Sciatic nerve (tissue), 2 donors: ENCODE measurements at regions of chr11 and their contacts with region 1.

Region 1: GRCh38 chr11:128905345-128906184 is 14.4 kb downstream of the KCNJ5 start:
- DNase-seq: no peak
- ATAC-seq: peak; percentile 67

Region 2: DNA sequence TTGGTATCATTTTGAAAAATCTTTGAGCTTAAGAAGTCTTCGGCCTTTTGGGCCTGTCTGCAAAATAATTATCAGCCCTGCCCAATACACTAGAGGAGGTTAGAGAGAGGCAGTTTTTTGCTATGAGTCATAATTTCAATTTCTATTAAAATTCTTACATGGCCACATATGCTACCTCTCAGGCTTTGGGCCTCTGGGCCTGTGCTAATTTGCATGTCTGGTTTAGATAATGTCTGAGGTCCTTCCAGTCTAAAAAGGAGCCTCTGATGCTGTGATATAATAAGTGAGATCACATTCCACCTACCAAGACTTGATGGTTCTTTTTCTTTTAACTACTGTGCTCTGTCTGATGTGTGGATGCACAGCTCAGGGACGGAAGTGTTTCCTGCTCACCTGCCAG is 109.3 kb before region 1 on chr11:
- intact Hi-C with region 1: no loop called
- DNase-seq: no peak
- ATAC-seq: no peak

Region 3: GRCh38 chr11:128942817-128943427 is 37.4 kb after region 1 on chr11 and contains the start of gene TP53AIP1:
- intact Hi-C with region 1: loop called (anchors 1 kb)
- DNase-seq: no peak
- ATAC-seq: no peak
- total RNA-seq, gene TP53AIP1: not detected

Region 4: GRCh38 chr11:130653838-130654636 is 1748.5 kb after region 1 on chr11:
- intact Hi-C with region 1: loop called (anchors 5 kb)
- DNase-seq: peak; percentile 68
- ATAC-seq: peak; percentile 93